ENCODE measurements at regions of chr6 and their contacts with region 1.

Region 1: DNA sequence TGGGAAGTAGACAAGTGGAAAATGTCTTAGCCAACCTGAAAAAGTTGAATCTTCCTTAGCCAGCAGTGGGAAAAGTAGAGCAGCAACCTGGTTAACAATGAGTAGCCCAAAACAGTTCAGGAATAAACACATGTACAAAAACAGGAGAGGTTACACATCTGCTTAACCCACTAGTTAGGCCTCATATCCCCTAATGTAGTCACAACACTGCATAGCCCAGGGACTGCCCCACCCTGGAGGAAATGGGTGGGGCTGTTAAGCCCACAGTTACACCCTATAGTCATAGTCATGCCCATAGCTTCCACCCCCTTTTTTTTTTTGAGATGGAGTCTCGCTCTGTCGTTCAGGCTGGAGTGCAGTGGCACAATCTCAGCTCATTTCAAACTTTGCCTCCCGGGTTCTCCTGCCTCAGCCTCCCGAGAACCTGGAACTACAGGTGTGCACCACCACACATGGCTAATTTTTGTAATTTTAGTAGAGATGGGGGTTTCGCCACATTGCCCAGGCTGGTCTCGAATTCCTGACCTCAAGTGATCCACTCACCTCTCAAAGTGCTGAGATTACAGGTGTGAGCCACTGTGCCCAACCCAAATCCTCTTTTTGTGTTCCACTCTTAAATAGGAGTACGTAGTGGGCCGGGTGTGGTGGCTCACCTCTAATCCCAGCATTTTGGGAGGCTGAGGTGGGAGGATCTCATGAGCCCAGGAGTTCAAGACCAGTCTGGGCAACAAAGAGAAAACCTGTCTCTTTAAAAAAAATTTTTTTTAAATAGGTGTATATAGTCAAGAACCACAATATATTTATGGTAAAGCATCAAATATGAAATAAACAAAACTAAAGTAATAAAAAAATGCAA is 24.5 kb downstream of the ILRUN start:
- DNase-seq: peak; percentile 78 to 92 (median 85)
- H3K4me3 ChIP-seq: peak overlapping the region; percentile 32 to 43
- H3K4me3 Mint-ChIP-seq: peak overlapping the region; percentile 57 to 93 (median 82)
- H3K27ac ChIP-seq: peak overlapping the region; percentile 79
- H3K27ac Mint-ChIP-seq: peak overlapping the region; percentile 92 to 100 (median 97)
- H3K4me1 ChIP-seq: peaks cover 79% of the 10 kb centered on the region
- H3K4me1 Mint-ChIP-seq: peaks cover 40 to 79% (median 60%) of the 10 kb centered on the region in 4 donors
- H3K27me3 ChIP-seq: no peaks in the 10 kb centered on the region
- H3K27me3 Mint-ChIP-seq: peaks cover 0 to 2% of the 10 kb centered on the region in 2 donors

Region 2: GRCh38 chr6:34595332-34596184 is 76.5 kb before region 1 on chr6:
- CTCF ChIA-PET with region 1: no interaction called
- POLR2A ChIA-PET with region 1: no interaction called
- intact Hi-C with region 1: no loop called
- DNase-seq: no peak
- H3K4me3 ChIP-seq: no peak overlapping the region
- H3K4me3 Mint-ChIP-seq: no peak overlapping the region
- H3K27ac ChIP-seq: no peak overlapping the region
- H3K27ac Mint-ChIP-seq: peak overlapping the region in 2 of 7 donors; percentile 25 to 80
- H3K4me1 ChIP-seq: peaks cover 23% of the 10 kb centered on the region
- H3K4me1 Mint-ChIP-seq: peaks cover 40 to 66% (median 54%) of the 10 kb centered on the region in 4 donors
- H3K27me3 ChIP-seq: no peaks in the 10 kb centered on the region
- H3K27me3 Mint-ChIP-seq: no peaks in the 10 kb centered on the region

Region 3: GRCh38 chr6:34656378-34657036 is 15.5 kb before region 1 on chr6:
- CTCF ChIA-PET with region 1: interaction called, 22 read pairs
- POLR2A ChIA-PET with region 1: interaction called, 133 read pairs
- intact Hi-C with region 1: loop called (anchors 2 kb)
- DNase-seq: peak; percentile 26 to 72 (median 33)
- H3K4me3 ChIP-seq: peak overlapping the region; percentile 34 to 37
- H3K4me3 Mint-ChIP-seq: peak overlapping the region; percentile 83 to 96 (median 89)
- H3K27ac ChIP-seq: peak overlapping the region; percentile 67
- H3K27ac Mint-ChIP-seq: peak overlapping the region; percentile 90 to 98 (median 94)
- H3K4me1 ChIP-seq: peaks cover 73% of the 10 kb centered on the region
- H3K4me1 Mint-ChIP-seq: peaks cover 34 to 65% (median 50%) of the 10 kb centered on the region in 4 donors
- H3K27me3 ChIP-seq: no peaks in the 10 kb centered on the region
- H3K27me3 Mint-ChIP-seq: no peaks in the 10 kb centered on the region

Region 4: GRCh38 chr6:34684364-34684763 is 12.3 kb after region 1 on chr6:
- CTCF ChIA-PET with region 1: no interaction called
- POLR2A ChIA-PET with region 1: interaction called, 13 read pairs
- intact Hi-C with region 1: no loop called
- DNase-seq: no peak
- H3K4me3 ChIP-seq: no peak overlapping the region
- H3K4me3 Mint-ChIP-seq: no peak overlapping the region
- H3K27ac ChIP-seq: no peak overlapping the region
- H3K27ac Mint-ChIP-seq: peak overlapping the region in 5 of 7 donors; percentile 35 to 69 (median 63)
- H3K4me1 ChIP-seq: peaks cover 26% of the 10 kb centered on the region
- H3K4me1 Mint-ChIP-seq: peaks cover 32 to 63% (median 39%) of the 10 kb centered on the region in 4 donors
- H3K27me3 ChIP-seq: no peaks in the 10 kb centered on the region
- H3K27me3 Mint-ChIP-seq: no peaks in the 10 kb centered on the region

Region 5: GRCh38 chr6:34696739-34697543 is 24.9 kb after region 1 on chr6 and contains the start of gene ILRUN:
- CTCF ChIA-PET with region 1: interaction called, 4 read pairs
- POLR2A ChIA-PET with region 1: interaction called, 48 read pairs
- intact Hi-C with region 1: loop called (anchors 1 kb)
- DNase-seq: peak; percentile 92 to 96 (median 93)
- H3K4me3 ChIP-seq: peak within 1 kb of the TSS; percentile 96 to 97
- H3K4me3 Mint-ChIP-seq: peak within 1 kb of the TSS; percentile 95 to 100 (median 98)
- H3K27ac ChIP-seq: peak within 1 kb of the TSS; percentile 98
- H3K27ac Mint-ChIP-seq: peak within 1 kb of the TSS; percentile 93 to 100 (median 100)
- H3K4me1 ChIP-seq: peaks cover 48% of the 10 kb centered on the region
- H3K4me1 Mint-ChIP-seq: peaks cover 32 to 57% (median 45%) of the 10 kb centered on the region in 4 donors
- H3K27me3 ChIP-seq: no peaks in the 10 kb centered on the region
- H3K27me3 Mint-ChIP-seq: peaks cover 0 to 2% of the 10 kb centered on the region in 2 donors
- total RNA-seq, gene ILRUN: 68.6 to 70.7 TPM

Region 6: DNA sequence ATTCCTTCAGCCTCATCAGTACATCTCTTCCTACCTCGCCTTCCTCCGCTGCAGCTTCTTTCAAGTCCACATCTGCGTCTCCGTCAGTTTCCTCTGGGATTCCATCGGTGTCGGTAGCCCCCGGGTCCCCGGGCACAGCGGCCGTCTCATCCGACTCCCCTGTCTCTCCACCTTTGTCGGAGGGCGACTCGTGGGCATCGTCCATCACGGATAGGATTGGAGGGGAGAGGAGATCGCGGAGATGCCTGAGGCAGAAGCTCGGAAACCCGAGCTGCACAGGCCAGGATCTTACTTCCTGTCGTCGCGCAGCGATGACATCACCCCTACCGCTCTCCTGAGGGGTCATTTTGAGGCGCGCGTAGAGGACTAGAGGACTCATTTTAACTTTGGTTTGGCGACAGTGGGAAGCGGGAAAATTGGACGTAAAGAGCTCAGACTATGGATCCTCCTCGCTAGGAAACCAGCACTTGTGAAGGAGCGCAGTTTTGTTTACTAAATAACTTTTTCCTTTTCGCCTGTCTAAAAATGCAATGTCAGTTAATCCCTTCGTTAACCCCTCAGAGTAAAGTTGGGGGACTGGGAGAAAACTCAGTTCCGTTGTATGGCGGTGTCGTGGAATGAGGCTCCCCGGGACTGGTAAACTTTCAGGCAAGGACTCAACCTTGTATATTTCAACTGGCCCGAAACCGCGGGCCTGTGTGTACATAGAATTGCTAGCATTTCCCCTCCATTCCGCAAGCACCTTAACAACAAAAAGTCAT is 215.9 kb after region 1 on chr6 and contains the start of gene TAF11:
- CTCF ChIA-PET with region 1: no interaction called
- POLR2A ChIA-PET with region 1: interaction called, 12 read pairs
- intact Hi-C with region 1: loop called (anchors 10 kb)
- DNase-seq: peak; percentile 87 to 93 (median 88)
- H3K4me3 ChIP-seq: peak within 1 kb of the TSS; percentile 70 to 91
- H3K4me3 Mint-ChIP-seq: peak within 1 kb of the TSS; percentile 97 to 100 (median 99)
- H3K27ac ChIP-seq: peak within 1 kb of the TSS; percentile 94
- H3K27ac Mint-ChIP-seq: peak within 1 kb of the TSS; percentile 95 to 100 (median 99)
- H3K4me1 ChIP-seq: peaks cover 31% of the 10 kb centered on the region
- H3K4me1 Mint-ChIP-seq: peaks cover 31 to 65% (median 52%) of the 10 kb centered on the region in 4 donors
- H3K27me3 ChIP-seq: no peaks in the 10 kb centered on the region
- H3K27me3 Mint-ChIP-seq: no peaks in the 10 kb centered on the region
- total RNA-seq, gene TAF11: 25.3 to 26.1 TPM

Measured in CD4-positive, alpha-beta memory T cell (primary cell).